ENCODE measurements at regions of chr17 and their contacts with region 1.

Region 1: GRCh38 chr17:4789901-4790704 is 1.3 kb downstream of the GLTPD2 start:
- DNase-seq: peak; percentile 83

Region 2: DNA sequence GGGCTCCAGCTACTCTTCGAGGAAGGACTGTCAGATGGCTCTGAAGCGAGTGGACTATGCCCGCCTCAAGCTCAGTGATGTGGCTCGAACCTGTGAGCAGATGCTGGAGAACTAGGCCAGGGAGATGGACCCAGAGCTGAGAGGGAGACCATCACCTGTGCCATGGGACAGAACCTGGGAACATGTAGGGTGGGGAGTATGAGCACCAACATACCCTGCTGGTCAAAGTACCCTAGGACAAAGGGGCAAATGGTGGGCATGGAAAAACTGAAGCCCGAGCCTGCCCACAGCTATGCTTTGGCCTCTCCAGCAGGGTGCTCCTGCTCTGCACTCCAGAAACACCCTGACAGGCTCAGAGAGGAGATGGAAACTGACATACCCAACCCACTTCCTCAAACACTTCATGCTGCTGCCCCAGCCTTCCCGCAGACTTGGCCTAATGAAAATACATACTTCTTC is 57.0 kb before region 1 on chr17:
- CTCF ChIA-PET with region 1: interaction called, 5 read pairs
- POLR2A ChIA-PET with region 1: interaction called, 20 read pairs
- DNase-seq: no peak

Region 3: GRCh38 chr17:4742629-4743028 is 47.5 kb before region 1 on chr17:
- CTCF ChIA-PET with region 1: interaction called, 8 read pairs
- POLR2A ChIA-PET with region 1: interaction called, 10 read pairs
- DNase-seq: no peak

Region 4: DNA sequence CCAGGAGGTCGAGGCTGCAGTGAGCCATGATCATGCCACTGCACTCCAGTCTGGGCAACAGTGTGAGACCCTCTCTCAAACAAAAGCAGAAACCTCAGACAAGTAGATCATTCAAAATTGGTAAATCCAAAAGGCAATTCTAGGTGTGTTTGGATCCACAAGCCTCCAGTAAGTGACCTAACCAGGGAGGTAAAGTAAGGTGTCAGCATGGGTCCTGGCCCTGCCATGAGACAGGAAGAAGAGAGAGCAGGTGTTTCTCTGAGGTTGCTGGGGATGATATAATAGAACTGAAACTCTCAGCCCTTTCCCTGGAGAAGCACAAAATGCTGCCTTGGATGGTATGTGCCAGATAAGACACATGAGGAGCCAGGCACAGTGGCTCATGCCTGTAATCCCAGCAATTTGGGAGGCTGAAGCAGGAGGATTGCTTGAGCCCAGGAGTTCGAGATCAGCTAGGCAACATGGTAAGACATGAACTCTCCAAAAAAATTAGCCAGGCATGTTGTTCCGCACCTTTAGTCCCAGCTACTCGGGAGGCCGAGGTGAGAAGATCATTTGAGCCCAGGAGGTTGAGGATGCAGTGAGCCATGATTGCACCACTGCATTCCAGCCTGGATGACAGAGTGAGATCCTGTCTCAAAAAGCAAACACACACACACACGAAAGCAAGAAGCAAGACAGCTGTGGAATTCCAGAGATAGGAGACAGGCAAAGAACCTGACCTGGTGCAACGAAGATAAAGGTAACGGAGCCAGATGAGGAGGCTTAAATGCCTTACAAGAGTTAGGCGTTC is 11.9 kb before region 1 on chr17:
- CTCF ChIA-PET with region 1: interaction called, 8 read pairs
- POLR2A ChIA-PET with region 1: interaction called, 15 read pairs
- DNase-seq: no peak

Region 5: GRCh38 chr17:4806777-4807604 is 16.9 kb after region 1 on chr17 and contains the start of gene PLD2:
- CTCF ChIA-PET with region 1: interaction called, 8 read pairs
- POLR2A ChIA-PET with region 1: interaction called, 19 read pairs
- DNase-seq: peak; percentile 97

Region 6: DNA sequence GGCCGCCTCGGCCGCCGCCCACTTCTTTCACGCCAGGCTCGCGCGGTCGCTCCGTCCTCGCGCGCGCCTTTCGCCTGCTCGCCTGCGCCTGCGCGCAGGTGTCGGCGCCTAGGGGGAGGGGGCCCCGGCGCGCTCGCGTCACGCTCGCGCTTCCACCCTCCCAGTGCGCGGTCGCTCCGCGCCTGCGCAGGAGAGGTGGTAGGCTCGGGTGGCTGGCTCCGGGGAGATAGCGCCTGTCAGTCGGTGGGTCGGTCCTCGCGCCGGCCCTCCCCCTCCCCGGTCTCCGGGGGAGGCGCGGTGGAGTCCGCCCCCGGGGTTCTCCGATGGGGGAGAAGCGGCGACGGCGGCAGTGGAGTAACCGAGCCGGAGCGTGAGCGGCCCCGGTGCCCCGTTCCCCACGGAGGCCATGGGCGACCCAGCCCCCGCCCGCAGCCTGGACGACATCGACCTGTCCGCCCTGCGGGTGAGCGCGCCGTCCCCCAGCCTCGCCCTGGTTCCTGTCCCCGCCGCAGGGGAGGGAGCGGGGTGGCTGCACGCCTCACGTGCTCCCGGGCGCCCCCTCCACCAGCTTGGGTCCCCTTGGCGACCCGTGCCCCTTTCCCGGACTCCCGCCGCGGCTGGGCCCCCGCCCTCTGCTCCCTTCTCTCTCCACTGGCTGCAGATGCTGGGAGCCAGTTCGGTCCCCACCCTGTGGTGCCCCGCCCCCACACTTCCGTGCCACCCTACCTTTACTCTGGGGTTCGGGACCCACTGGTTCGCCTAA is 43.3 kb after region 1 on chr17 and contains the start of gene MINK1:
- CTCF ChIA-PET with region 1: interaction called, 3 read pairs
- POLR2A ChIA-PET with region 1: interaction called, 12 read pairs
- DNase-seq: peak; percentile 99

Region 7: DNA sequence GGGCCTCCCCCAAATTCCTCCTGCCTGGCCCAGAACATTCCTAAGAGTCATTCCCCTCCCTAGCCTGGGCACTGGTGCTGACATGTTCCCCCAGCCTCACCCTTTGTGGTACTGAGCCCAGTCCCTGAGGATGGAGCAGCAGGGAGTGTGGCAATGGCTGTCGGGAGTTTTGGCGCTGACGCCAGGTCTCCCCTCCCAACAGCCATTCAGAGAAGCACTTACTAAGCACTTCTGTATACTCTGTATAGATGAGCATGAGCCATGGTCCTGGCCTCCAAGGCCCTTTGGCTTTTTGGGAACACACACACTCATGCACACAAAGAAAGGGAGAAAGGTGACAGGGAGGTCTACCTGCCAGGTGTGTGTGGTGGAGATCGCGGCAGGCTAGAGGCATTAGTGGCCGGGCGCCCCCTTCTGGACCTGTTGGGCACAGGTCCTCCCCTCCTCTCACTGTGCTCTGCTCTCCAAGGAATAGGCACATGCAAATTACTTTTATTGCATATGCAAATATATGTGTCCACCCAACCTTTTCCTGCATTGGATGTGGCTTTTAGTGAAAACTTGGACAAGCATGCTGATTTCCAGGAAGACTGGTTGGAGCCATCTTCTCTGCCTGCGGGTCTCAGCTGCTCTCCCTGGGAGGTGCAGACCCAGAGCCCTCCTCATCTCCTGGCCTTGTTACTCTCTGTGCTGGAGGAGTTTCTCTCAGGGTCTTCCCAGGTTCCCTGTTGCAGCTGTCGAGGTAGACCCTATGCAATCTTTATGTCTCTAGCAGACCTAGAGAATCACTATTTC is 91.9 kb after region 1 on chr17:
- CTCF ChIA-PET with region 1: no interaction called
- POLR2A ChIA-PET with region 1: interaction called, 14 read pairs
- DNase-seq: peak; percentile 75

Measured in HEK293T (cell line).